Natural killer cell (primary cell): ENCODE measurements at regions of chr7 and their contacts with region 1.

Region 1: DNA sequence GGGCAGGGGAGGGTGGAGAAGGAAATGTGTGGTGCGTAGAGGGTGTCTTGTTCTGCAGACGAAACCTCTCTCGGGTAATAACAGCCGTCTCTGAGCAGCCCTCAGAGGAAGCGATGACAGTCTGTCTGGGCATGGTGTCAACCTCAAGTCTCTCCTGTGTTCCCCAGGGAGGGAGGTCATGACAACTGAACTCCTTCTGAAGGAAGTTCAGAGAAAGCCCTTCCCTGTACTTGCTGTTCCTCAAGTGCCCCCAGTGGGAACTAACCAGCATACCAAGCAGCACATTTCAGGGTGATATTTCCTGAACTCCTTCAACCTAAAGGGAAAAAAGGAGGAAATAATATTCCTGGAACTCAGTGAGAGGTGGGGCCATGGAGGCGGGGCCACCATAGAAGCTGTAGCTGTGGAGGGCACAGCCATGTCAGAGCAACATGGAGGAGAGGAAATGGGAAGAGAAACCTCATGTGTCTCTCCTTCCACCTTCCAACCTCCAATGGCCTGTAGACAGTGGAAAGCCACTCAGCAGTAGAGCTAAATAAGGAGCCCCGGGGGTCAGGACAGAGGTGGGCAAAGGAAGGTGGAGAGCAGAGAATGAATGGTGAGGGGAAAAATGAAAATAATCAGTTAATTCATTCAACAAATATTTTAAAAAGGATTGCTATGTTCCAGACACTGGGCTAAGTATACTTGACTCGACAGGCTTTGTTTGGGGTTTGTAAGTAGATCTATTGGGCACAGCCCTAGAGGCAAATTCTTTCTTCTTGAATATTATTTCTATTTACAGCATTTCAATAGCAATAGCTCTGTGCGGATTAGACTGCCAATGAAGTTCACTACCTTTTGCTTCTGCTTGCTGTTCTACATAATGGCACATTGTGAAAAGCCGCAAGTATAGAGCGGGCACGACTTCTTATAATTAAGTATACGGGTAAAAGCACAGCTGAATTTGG is 61.0 kb upstream of the AOAH start:
- DNase-seq: peak; percentile 76 to 94
- ATAC-seq: peak; percentile 76 to 92 (median 84)
- H3K4me3 ChIP-seq: no peak overlapping the region
- H3K4me3 Mint-ChIP-seq: peak overlapping the region; percentile 92
- H3K27ac ChIP-seq: peak overlapping the region; percentile 92
- H3K27ac Mint-ChIP-seq: peak overlapping the region; percentile 96 to 97
- H3K4me1 ChIP-seq: peaks cover 67% of the 10 kb centered on the region
- H3K4me1 Mint-ChIP-seq: peaks cover 73 to 88% of the 10 kb centered on the region in 2 donors
- H3K27me3 ChIP-seq: no peaks in the 10 kb centered on the region
- H3K27me3 Mint-ChIP-seq: no peaks in the 10 kb centered on the region
- CTCF ChIP-seq: no peak

Region 2: GRCh38 chr7:36620166-36620708 is 165.0 kb before region 1 on chr7:
- intact Hi-C with region 1: loop called (anchors 2 kb)
- DNase-seq: no peak
- ATAC-seq: peak; percentile 92 to 94 (median 93)
- H3K4me3 ChIP-seq: no peak overlapping the region
- H3K4me3 Mint-ChIP-seq: peak overlapping the region; percentile 28
- H3K27ac ChIP-seq: peak overlapping the region; percentile 69
- H3K27ac Mint-ChIP-seq: peak overlapping the region; percentile 79 to 89
- H3K4me1 ChIP-seq: peaks cover 11% of the 10 kb centered on the region
- H3K4me1 Mint-ChIP-seq: peaks cover 49 to 63% of the 10 kb centered on the region in 2 donors
- H3K27me3 ChIP-seq: no peaks in the 10 kb centered on the region
- H3K27me3 Mint-ChIP-seq: no peaks in the 10 kb centered on the region
- CTCF ChIP-seq: no peak

Region 3: DNA sequence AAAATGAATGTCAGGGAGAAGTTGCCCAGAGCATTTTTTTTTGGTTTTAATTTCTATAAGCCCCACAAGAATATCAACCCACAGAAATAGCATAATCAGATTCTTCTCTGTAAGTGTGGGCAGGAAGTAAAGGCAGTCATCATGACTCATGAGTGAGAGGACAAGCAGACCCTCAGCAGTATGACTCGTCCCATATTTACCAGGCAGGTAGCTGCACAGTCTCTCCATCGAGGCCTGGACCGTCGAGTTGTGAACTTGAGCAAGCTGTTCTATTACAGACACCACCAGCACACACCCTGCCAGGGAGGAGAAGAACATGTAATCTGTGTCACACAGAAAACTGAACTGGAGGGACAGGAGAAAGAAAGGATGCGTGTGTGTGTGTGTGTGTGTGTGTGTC is 98.8 kb before region 1 on chr7:
- intact Hi-C with region 1: loop called (anchors 2 kb)
- DNase-seq: peak; percentile 49 to 58
- ATAC-seq: peak; percentile 84 to 89 (median 89)
- H3K4me3 ChIP-seq: no peak overlapping the region
- H3K4me3 Mint-ChIP-seq: peak overlapping the region; percentile 79
- H3K27ac ChIP-seq: peak overlapping the region; percentile 32
- H3K27ac Mint-ChIP-seq: peak overlapping the region; percentile 88 to 92
- H3K4me1 ChIP-seq: peaks cover 44% of the 10 kb centered on the region
- H3K4me1 Mint-ChIP-seq: peaks cover 77 to 86% of the 10 kb centered on the region in 2 donors
- H3K27me3 ChIP-seq: no peaks in the 10 kb centered on the region
- H3K27me3 Mint-ChIP-seq: no peaks in the 10 kb centered on the region
- CTCF ChIP-seq: no peak

Region 4: DNA sequence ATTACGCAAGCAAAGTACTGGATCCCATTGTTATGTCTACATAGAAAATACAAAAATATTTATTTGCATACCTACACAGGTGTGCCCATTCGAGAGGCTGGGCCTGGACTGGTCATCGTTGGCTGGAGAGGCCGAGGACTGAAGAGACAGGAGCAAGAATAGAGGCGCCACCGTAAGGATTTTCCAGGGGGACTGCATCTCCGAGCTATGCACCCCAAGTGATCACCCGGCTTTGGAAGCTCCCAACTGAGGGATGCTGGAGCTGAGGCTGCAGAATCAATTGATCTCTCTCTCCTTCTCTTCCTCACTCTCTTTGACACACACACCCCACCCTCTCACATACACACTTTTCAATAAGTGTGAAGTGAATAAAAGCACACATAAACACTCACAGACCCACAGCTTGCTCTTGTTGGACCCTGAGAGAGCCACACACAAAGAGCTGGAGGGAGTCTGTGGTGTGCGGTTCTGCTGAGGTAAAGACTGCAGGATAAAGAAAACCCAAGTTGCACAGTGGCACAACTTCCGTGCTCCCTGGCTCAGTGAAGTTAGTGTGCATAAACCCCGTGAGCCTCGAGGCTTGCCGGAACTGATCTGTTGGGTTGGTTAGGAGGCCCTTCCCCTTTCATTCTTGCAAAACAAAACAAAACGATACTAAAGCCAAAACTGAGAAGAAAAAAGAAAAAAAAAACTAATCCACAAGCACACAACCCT is 61.2 kb before region 1 on chr7 and contains the start of gene AOAH:
- intact Hi-C with region 1: loop called (anchors 1 kb)
- DNase-seq: peak; percentile 72 to 93
- ATAC-seq: peak; percentile 74 to 92 (median 89)
- H3K4me3 ChIP-seq: peak within 1 kb of the TSS; percentile 78
- H3K4me3 Mint-ChIP-seq: peak within 1 kb of the TSS; percentile 91
- H3K27ac ChIP-seq: peak within 1 kb of the TSS; percentile 75
- H3K27ac Mint-ChIP-seq: peak within 1 kb of the TSS; percentile 90
- H3K4me1 ChIP-seq: peaks cover 57% of the 10 kb centered on the region
- H3K4me1 Mint-ChIP-seq: peaks cover 84 to 88% of the 10 kb centered on the region in 2 donors
- H3K27me3 ChIP-seq: no peaks in the 10 kb centered on the region
- H3K27me3 Mint-ChIP-seq: no peaks in the 10 kb centered on the region
- CTCF ChIP-seq: no peak
- total RNA-seq, gene AOAH: 263 to 403 (median 312) TPM

Region 5: DNA sequence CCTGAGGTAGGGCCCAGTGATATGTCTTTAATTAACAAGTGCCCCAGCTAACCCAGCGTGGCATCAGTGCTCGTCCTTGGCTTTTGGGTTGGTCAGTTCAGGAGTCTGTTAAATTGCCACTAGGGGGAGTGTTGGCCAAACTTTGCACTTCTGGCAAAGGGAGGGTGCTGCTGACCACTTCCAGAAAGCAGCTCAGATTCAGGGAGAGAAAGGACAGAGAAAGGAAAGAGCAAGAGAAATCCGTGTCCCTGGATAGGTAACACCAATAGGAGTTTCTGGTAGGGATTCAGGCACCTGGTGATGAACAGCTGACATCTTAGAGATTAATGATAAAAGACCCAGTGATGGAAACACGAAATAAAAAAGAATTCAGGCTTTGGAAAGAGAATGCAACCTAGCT is 182.1 kb after region 1 on chr7:
- intact Hi-C with region 1: loop called (anchors 5 kb)
- DNase-seq: no peak
- ATAC-seq: peak in 1 of 3 donors; percentile 46
- H3K4me3 ChIP-seq: no peak overlapping the region
- H3K4me3 Mint-ChIP-seq: peak overlapping the region; percentile 40
- H3K27ac ChIP-seq: no peak overlapping the region
- H3K27ac Mint-ChIP-seq: peak overlapping the region; percentile 68 to 83
- H3K4me1 ChIP-seq: peaks cover 20% of the 10 kb centered on the region
- H3K4me1 Mint-ChIP-seq: peaks cover 52 to 54% of the 10 kb centered on the region in 2 donors
- H3K27me3 ChIP-seq: no peaks in the 10 kb centered on the region
- H3K27me3 Mint-ChIP-seq: no peaks in the 10 kb centered on the region
- CTCF ChIP-seq: no peak

Region 6: GRCh38 chr7:37181550-37181932 is 396.3 kb after region 1 on chr7:
- intact Hi-C with region 1: loop called (anchors 10 kb)
- DNase-seq: no peak
- ATAC-seq: peak in 1 of 3 donors; percentile 23
- H3K4me3 ChIP-seq: no peak overlapping the region
- H3K4me3 Mint-ChIP-seq: no peak overlapping the region
- H3K27ac ChIP-seq: no peak overlapping the region
- H3K27ac Mint-ChIP-seq: no peak overlapping the region
- H3K4me1 ChIP-seq: peaks cover 6% of the 10 kb centered on the region
- H3K4me1 Mint-ChIP-seq: peaks cover 15 to 25% of the 10 kb centered on the region in 2 donors
- H3K27me3 ChIP-seq: no peaks in the 10 kb centered on the region
- H3K27me3 Mint-ChIP-seq: no peaks in the 10 kb centered on the region
- CTCF ChIP-seq: no peak